ENCODE measurements at regions of chr7 and their contacts with region 1.

Region 1: DNA sequence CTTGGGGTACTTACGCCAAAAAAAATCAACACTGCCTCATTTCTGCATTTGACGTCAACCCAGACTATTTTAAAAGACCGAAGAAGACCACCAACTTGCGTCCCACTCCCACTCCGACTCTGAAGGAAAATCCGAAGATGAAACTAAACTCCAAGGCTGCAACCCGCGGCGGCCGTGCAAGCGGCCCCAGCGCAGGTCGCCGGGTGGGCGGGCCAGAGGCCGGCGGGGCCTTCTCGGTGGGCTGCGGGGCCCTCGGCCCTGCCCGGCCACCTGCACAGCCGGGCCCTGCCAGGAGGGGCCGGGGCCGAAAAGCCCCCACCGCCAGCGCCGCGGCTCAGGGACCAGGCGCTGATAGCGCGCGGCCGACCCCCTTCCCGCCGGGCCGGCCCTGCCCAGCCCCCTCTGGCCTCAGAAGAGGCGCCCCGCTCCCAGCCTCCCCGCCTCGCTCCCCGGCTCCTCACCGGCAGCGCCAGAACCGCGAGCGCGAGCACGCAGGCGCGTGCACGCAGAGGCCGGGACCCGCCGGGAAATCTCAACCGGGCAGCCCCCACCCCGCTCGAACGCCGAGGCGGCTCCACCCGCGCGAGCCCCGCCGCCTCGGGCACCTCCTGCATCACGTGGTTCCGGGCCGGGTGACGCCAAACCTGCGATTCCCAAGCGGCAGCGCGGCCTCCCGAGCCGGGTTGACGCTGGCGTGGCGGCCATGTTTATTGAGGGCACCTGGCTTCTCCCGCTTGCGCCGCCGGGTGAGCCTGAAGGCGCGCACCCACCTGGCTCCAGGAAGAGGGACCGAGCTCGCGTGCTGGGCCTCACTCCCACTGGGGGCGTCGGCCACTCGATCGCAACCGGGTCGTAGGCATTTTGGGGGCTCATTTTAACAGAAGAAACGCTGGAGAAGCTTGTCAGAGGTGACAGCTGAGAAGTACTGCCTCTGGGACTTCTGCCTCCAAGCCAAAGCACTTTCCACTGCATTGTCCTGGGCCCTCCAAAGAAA is at the start of gene C7orf25:
- DNase-seq: peak; percentile 96
- H3K4me3 Mint-ChIP-seq: peak within 1 kb of the TSS; percentile 90
- H3K27ac Mint-ChIP-seq: peak within 1 kb of the TSS; percentile 81
- H3K4me1 Mint-ChIP-seq: peaks cover 66% of the 10 kb centered on the region
- H3K27me3 Mint-ChIP-seq: no peaks in the 10 kb centered on the region
- total RNA-seq, gene C7orf25: 2.4 to 5.3 TPM

Region 2: GRCh38 chr7:42931834-42932651 is 20.3 kb after region 1 on chr7 and contains the starts of genes MRPL32 and PSMA2:
- CTCF ChIA-PET with region 1: interaction called, 3 read pairs
- POLR2A ChIA-PET with region 1: interaction called, 96 read pairs
- DNase-seq: peak; percentile 95
- H3K4me3 Mint-ChIP-seq: peak within 1 kb of the TSS; percentile 97
- H3K27ac Mint-ChIP-seq: peak within 1 kb of the TSS; percentile 93
- H3K4me1 Mint-ChIP-seq: peaks cover 67% of the 10 kb centered on the region
- H3K27me3 Mint-ChIP-seq: no peaks in the 10 kb centered on the region
- total RNA-seq, gene MRPL32: 47.2 to 47.4 TPM
- total RNA-seq, gene PSMA2: 132 to 133 TPM

Region 3: DNA sequence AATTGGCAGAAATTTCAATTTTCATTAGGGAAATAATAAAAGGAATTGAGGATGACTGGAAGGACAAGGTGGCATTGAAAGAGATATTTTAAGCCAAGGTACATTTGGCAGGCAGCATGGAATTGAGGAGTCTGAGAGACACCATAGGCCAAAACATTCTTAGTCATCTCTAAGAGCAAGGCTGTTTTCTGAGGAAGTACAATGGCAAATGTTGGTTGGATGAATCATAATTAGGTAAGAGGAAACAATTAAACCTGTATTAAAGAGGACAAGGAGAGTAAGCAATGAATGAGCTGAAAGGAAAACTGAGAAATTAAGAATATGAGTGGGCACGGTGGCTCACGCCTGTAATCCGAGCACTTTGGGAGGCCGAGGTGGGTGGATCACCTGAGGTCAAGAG is 106.7 kb after region 1 on chr7:
- CTCF ChIA-PET with region 1: no interaction called
- POLR2A ChIA-PET with region 1: no interaction called
- DNase-seq: no peak
- H3K4me3 Mint-ChIP-seq: no peak overlapping the region
- H3K27ac Mint-ChIP-seq: no peak overlapping the region
- H3K4me1 Mint-ChIP-seq: no peaks in the 10 kb centered on the region
- H3K27me3 Mint-ChIP-seq: peaks cover 12% of the 10 kb centered on the region

Region 4: DNA sequence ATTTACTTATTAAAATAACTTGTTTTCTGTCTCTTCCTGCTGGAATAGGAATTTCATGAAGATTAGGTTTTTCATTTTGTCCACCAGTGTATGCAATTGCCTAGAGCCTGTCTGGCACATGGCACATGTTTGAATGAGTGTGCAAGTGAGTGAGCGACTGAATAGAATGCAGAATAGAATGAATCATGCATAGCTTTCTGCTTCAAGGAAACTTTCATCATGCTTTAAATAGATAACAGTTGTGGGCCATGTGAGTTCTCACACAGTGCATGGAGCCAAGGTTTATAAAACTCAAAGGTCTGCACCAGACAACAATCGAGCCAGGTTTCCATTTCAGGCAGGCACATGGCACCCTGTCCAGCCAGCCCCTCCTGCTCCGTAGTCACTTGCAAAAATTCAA is 126.5 kb after region 1 on chr7:
- CTCF ChIA-PET with region 1: no interaction called
- POLR2A ChIA-PET with region 1: no interaction called
- DNase-seq: no peak
- H3K4me3 Mint-ChIP-seq: no peak overlapping the region
- H3K27ac Mint-ChIP-seq: no peak overlapping the region
- H3K4me1 Mint-ChIP-seq: no peaks in the 10 kb centered on the region
- H3K27me3 Mint-ChIP-seq: peaks cover 9% of the 10 kb centered on the region

Region 5: DNA sequence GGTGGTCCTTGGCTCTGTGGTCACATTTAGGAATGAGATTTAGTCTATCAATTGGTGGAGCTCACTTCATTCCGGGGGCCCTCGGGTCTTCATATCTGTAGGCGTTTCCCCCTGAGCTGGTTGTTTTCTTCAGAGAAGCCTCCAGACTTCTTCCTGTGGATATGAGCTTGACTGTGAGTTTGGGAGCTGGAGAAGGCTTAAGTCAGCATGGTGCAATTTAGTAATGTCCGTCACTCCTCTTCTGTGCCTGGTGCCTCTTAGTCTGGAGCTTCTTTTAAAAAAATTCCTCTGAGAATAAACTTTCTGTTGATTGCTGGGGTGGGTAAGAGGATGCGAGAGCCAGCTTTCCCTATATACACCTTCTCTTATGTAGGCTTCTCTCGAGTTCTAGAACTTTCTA is 240.9 kb after region 1 on chr7:
- CTCF ChIA-PET with region 1: no interaction called
- POLR2A ChIA-PET with region 1: no interaction called
- DNase-seq: no peak
- H3K4me3 Mint-ChIP-seq: no peak overlapping the region
- H3K27ac Mint-ChIP-seq: no peak overlapping the region
- H3K4me1 Mint-ChIP-seq: no peaks in the 10 kb centered on the region
- H3K27me3 Mint-ChIP-seq: peaks cover 3% of the 10 kb centered on the region